Dorsolateral prefrontal cortex (tissue), 120 donors: ENCODE measurements at regions of chr9 and their contacts with region 1.

Region 1: DNA sequence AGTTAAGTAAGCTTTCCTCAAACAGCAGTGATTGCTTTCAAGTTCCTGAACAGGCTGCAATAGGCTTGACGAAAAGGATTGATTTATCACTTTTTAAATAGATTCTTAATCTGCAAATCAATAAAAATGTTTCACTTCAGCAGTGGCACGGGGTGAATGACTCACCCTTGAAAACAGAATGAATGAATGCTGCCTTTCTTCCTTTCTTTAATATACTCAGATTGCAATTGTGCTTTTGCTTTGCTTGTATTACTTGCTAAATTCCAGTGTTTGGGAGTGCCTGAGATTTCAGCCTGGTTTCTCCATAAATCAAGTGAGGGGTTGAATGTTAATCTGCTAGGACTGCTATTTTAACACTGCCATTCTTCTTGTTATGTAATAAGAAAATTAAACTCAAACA is 1293.8 kb downstream of the PTPRD start:
- DNase-seq: no peak
- H3K4me3 ChIP-seq: peak overlapping the region in 14 of 59 donors; percentile 1 to 31 (median 12)
- H3K27ac ChIP-seq: peak overlapping the region in 43 of 59 donors; percentile 1 to 76 (median 39)
- H3K27me3 ChIP-seq: no peaks in the 10 kb centered on the region
- CTCF ChIP-seq: no peak

Region 2: GRCh38 chr9:9173264-9173663 is 145.7 kb before region 1 on chr9:
- intact Hi-C with region 1: no loop called
- DNase-seq: no peak
- H3K4me3 ChIP-seq: no peak overlapping the region
- H3K27ac ChIP-seq: no peak overlapping the region
- H3K27me3 ChIP-seq: no peaks in the 10 kb centered on the region
- CTCF ChIP-seq: no peak

Region 3: DNA sequence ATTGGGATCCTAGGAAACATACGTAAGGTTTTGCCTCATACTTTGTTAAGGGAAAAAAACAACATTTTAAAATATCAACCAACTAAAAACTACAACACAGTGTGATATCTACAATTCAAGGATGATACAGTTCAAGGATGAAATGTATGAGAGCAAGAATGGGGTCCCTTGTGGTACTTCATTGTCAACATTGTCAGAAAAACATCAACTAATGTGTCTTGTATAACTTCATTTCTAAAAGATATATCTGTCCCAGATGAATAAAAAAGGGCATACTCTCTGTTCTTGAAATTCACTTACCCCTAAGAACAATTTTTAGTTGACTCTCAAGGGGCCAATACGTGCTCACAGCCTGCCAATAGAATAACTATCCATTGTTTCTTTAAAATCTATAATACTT is 43.3 kb after region 1 on chr9:
- intact Hi-C with region 1: loop called in 1 of 2 experiments (anchors 5 kb)
- DNase-seq: no peak
- H3K4me3 ChIP-seq: no peak overlapping the region
- H3K27ac ChIP-seq: no peak overlapping the region
- H3K27me3 ChIP-seq: no peaks in the 10 kb centered on the region
- CTCF ChIP-seq: no peak